ENCODE measurements at regions of chr9 and their contacts with region 1.

Region 1: DNA sequence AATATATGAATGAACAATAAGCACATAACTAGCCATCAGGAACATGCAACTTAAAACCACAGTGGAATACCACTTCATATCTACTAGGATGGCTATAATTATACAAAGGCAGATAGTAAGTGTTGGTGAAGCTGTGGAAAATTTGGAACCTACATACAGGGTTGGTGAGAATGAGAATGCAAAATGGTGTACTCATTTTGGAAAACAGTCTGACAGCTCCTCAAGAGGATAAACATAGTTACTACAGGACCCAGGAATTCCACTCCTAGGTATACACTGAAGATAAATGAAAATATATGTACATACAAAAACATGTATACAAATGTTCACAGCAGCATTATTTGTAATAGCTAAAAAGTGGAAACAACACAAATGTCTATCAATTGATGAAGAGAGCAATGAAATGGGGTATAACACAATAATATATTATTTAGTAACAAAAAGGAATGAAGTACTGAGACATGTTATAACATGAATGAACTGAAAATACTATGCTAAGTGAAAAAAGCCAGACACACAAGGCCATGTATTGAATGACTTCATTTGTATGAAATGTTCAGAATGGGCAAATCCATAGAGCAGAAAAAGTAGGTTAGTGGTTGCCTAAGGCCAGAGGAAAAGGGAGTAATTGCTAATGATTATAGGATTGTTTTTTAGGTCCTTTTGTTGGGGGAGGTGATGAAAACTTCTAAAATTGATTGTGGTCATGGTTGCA is 31.2 kb upstream of the CDK5RAP2 start:
- DNase-seq: no peak
- H3K4me3 ChIP-seq: no peak overlapping the region
- H3K27ac ChIP-seq: no peak overlapping the region
- H3K4me1 ChIP-seq: no peaks in the 10 kb centered on the region
- H3K27me3 ChIP-seq: no peaks in the 10 kb centered on the region
- CTCF ChIP-seq: peak; percentile 49

Region 2: DNA sequence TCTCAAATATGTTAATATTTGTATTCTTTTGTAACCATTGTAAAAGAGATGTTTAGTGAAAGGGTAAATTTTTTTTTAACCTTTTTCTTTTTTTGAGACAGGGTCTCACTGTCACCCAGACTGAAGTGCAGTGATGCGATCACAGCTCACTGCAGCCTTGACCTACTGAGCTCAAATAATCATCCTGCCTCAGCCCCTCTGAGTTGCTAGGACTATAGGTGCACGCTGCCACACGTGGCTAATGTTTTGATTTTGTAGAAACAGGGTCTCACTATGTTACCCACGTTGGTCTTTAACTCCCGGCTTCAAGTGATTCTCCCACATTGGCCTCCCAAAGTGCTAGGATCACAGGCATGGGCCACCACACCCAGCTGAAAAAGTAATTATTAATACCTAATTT is 26.8 kb after region 1 on chr9:
- CTCF ChIA-PET with region 1: interaction called, 23 read pairs
- POLR2A ChIA-PET with region 1: no interaction called
- intact Hi-C with region 1: no loop called
- DNase-seq: no peak
- H3K4me3 ChIP-seq: no peak overlapping the region
- H3K27ac ChIP-seq: no peak overlapping the region
- H3K4me1 ChIP-seq: no peaks in the 10 kb centered on the region
- H3K27me3 ChIP-seq: no peaks in the 10 kb centered on the region
- CTCF ChIP-seq: no peak

Region 3: DNA sequence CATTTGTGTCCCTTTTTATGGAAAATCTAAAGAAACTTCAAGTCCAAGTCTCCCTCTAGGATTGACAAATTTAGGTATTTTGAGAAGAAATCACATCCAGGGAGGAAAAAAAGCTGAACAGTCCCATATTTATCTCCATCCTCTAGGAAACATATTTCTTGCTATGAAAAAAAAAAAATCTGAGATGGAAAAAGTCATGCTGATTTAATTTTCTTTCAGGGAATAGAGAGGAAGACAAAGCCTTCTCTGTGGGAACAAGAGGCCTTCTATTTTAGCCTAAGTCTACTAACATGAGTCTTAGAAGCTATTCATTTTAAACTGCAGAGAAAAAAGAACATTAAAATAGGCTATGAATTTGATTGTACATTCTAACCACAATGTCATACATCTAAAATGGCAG is 31.9 kb after region 1 on chr9:
- CTCF ChIA-PET with region 1: interaction called, 32 read pairs
- POLR2A ChIA-PET with region 1: no interaction called
- intact Hi-C with region 1: no loop called
- DNase-seq: no peak
- H3K4me3 ChIP-seq: no peak overlapping the region
- H3K27ac ChIP-seq: no peak overlapping the region
- H3K4me1 ChIP-seq: no peaks in the 10 kb centered on the region
- H3K27me3 ChIP-seq: no peaks in the 10 kb centered on the region
- CTCF ChIP-seq: no peak

Region 4: DNA sequence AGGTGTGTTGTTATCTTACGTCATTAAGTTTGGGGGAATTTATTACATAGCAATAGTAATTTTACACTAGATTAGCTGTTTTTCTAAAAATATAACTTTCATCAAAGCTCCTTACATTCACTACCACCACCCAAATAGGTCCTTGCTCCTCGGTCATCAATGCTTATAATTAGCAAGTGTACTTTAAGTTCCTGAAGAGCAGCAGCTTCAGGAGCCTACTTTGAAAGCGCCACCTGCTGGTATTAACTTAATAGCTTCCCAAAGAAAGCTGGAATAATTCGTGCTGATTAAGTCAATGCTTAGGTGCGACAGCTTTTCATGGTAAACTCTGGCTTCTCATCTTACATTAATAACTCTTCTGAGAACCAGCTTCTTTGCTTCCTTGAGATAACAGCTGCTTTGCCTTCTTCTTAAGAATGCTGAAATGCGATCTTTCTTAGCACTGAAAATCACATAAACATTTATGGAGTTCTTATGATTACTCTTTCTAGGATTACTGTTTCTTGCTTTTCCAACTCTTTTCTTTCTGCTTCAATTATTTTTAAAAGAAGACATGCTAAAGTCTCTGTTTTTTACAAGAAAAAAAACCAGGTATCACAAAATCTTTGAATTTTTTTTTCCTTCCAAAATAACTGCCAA is 449.0 kb after region 1 on chr9:
- CTCF ChIA-PET with region 1: interaction called, 3 read pairs
- POLR2A ChIA-PET with region 1: no interaction called
- intact Hi-C with region 1: loop called (anchors 5 kb)
- DNase-seq: peak; percentile 26 to 62
- H3K4me3 ChIP-seq: no peak overlapping the region
- H3K27ac ChIP-seq: no peak overlapping the region
- H3K4me1 ChIP-seq: no peaks in the 10 kb centered on the region
- H3K27me3 ChIP-seq: no peaks in the 10 kb centered on the region
- CTCF ChIP-seq: peak; percentile 82